Calu3 (cell line): ENCODE measurements at regions of chr7 and their contacts with region 1.

Region 1: DNA sequence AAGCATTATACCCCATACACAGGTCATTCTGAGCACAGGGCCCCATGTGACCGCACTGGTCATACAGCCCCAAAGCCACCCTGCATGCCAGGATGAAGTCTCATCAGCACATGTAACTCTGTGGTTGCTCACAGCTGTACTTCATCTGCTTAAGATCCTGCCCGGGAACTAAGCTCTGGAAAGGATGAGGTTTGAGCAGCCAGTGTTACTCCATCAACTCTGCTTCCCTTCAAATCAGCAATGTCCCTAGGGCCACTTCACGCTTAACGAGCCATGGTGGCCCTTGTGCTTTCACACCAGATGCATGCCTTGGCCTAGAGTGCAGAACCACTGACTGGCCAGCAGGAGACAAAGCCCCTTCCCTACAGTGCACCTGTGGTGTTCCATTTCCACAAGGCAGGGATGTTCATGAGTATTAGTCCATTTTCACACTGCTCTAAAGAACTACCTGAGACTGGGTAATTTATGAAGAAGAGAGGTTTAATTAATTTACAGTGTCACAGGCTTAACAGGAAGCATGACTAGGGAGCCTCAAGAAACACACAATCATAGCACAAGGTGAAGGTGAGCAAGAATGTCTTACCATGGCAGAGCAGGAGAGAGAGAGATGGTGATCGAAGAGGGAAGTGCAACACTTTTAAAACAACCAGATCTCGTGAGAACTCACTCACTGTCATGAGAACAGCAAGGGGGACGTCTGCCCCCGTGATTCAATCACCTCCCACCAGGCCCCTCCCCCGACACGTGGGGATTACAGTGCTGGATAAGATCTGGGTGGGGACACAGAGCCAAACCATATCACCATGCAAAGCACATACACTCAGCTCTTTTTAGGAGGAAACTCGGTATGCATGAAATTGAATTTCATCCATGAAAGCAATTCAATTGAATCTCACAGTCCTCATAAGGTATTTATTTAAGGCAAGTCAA is 149.0 kb upstream of the CDCA7L start:
- DNase-seq: no peak
- H3K4me3 Mint-ChIP-seq: no peak overlapping the region
- H3K27ac Mint-ChIP-seq: no peak overlapping the region
- H3K4me1 Mint-ChIP-seq: peaks cover 7% of the 10 kb centered on the region
- H3K27me3 Mint-ChIP-seq: peaks cover 50% of the 10 kb centered on the region
- CTCF ChIP-seq: peak; percentile 43

Region 2: DNA sequence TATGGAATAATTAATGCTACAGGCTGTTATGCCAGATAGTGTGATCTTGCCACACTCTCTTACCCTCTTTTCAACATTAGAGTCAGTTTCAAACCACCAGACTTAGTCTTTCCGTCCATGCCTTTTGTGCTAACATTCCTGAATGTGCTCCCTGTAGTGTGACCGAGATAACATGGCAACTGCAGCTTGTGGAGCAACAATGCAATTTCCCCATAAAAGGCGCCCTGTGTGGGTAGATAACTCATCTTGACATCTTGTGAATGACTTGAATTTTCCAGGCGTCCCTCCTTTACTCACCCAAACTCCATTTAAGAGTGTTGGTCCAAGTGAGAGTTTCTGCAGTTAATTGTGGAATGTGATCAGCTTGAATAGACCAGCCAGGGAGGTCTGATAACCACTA is 452.3 kb before region 1 on chr7:
- CTCF ChIA-PET with region 1: no interaction called
- intact Hi-C with region 1: no loop called
- DNase-seq: no peak
- H3K4me3 Mint-ChIP-seq: no peak overlapping the region
- H3K27ac Mint-ChIP-seq: no peak overlapping the region
- H3K4me1 Mint-ChIP-seq: no peaks in the 10 kb centered on the region
- H3K27me3 Mint-ChIP-seq: no peaks in the 10 kb centered on the region
- CTCF ChIP-seq: no peak

Region 3: GRCh38 chr7:21960922-21961321 is 133.8 kb before region 1 on chr7:
- CTCF ChIA-PET with region 1: no interaction called
- intact Hi-C with region 1: no loop called
- DNase-seq: peak; percentile 51
- H3K4me3 Mint-ChIP-seq: no peak overlapping the region
- H3K27ac Mint-ChIP-seq: peak overlapping the region; percentile 28
- H3K4me1 Mint-ChIP-seq: peaks cover 48% of the 10 kb centered on the region
- H3K27me3 Mint-ChIP-seq: no peaks in the 10 kb centered on the region
- CTCF ChIP-seq: no peak

Region 4: GRCh38 chr7:22082886-22083703 is 11.6 kb before region 1 on chr7:
- CTCF ChIA-PET with region 1: interaction called, 11 read pairs
- intact Hi-C with region 1: no loop called
- DNase-seq: peak; percentile 99
- H3K4me3 Mint-ChIP-seq: peak overlapping the region; percentile 89
- H3K27ac Mint-ChIP-seq: peak overlapping the region; percentile 95
- H3K4me1 Mint-ChIP-seq: peaks cover 18% of the 10 kb centered on the region
- H3K27me3 Mint-ChIP-seq: peaks cover 40% of the 10 kb centered on the region
- CTCF ChIP-seq: peak; percentile 99

Region 5: GRCh38 chr7:22346383-22347107 is 251.9 kb after region 1 on chr7:
- CTCF ChIA-PET with region 1: no interaction called
- intact Hi-C with region 1: no loop called
- DNase-seq: peak; percentile 51
- H3K4me3 Mint-ChIP-seq: peak overlapping the region; percentile 42
- H3K27ac Mint-ChIP-seq: peak overlapping the region; percentile 79
- H3K4me1 Mint-ChIP-seq: peaks cover 78% of the 10 kb centered on the region
- H3K27me3 Mint-ChIP-seq: no peaks in the 10 kb centered on the region
- CTCF ChIP-seq: no peak